ENCODE measurements at regions of chr5 and their contacts with region 1.

Region 1: GRCh38 chr5:145743396-145744061 is 91.6 kb downstream of the PRELID2 start:
- DNase-seq: no peak
- H3K4me3 ChIP-seq: no peak overlapping the region
- H3K27ac ChIP-seq: no peak overlapping the region
- H3K4me1 ChIP-seq: no peaks in the 10 kb centered on the region
- H3K27me3 ChIP-seq: no peaks in the 10 kb centered on the region
- CTCF ChIP-seq: no peak

Region 2: DNA sequence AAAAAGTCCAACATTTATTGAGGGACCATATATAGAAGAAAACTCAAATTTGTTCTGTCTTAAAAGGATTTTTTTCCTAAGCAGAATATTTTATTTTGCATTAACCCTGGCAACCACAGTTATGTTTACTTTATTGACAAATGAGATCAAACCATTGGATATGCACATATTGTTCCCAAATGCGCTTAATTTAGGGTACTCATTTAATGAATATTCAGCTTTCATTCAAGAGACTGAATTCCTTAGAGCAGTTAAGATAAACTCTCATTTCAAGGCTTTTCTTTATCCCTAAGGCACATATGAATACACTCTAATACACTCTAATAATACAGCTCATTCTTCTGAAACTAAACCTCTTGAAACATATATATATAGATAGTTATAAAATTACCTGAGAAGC is 1781.3 kb before region 1 on chr5:
- CTCF ChIA-PET with region 1: no interaction called
- POLR2A ChIA-PET with region 1: interaction called, 28 read pairs
- intact Hi-C with region 1: no loop called
- DNase-seq: no peak
- H3K4me3 ChIP-seq: no peak overlapping the region
- H3K27ac ChIP-seq: no peak overlapping the region
- H3K4me1 ChIP-seq: peaks cover 23% of the 10 kb centered on the region
- H3K27me3 ChIP-seq: no peaks in the 10 kb centered on the region
- CTCF ChIP-seq: no peak

Region 3: GRCh38 chr5:145408048-145408341 is 335.5 kb before region 1 on chr5:
- CTCF ChIA-PET with region 1: no interaction called
- POLR2A ChIA-PET with region 1: interaction called, 24 read pairs
- intact Hi-C with region 1: no loop called
- DNase-seq: no peak
- H3K4me3 ChIP-seq: no peak overlapping the region
- H3K27ac ChIP-seq: no peak overlapping the region
- H3K4me1 ChIP-seq: peaks cover 7% of the 10 kb centered on the region; the same call in 1 of the 2 replicates
- H3K27me3 ChIP-seq: no peaks in the 10 kb centered on the region
- CTCF ChIP-seq: no peak

Region 4: DNA sequence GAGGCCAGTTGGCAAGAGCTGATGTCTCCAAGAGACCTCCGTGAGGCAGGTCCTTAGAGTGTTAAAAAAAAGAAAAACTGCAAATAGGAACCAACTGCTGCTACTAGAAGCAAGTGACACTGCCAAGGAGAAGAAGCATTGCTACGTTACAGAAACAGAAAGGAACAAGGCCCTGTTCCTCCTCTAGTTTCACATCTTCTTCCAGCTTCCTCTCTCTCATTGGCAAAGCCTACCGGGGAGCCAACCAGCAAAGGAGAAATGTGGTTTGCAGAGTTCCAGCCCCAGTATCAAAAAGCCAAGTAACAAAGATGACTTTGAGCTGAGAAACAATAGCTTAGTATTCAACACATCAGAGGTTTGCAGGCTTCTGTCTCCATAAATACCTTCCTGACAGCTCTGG is 54.3 kb before region 1 on chr5:
- CTCF ChIA-PET with region 1: no interaction called
- POLR2A ChIA-PET with region 1: no interaction called
- intact Hi-C with region 1: no loop called
- DNase-seq: no peak
- H3K4me3 ChIP-seq: no peak overlapping the region
- H3K27ac ChIP-seq: no peak overlapping the region
- H3K4me1 ChIP-seq: no peaks in the 10 kb centered on the region
- H3K27me3 ChIP-seq: no peaks in the 10 kb centered on the region
- CTCF ChIP-seq: no peak

Measured in PC-9 (cell line).